IMR-90 (cell line): ENCODE measurements at regions of chr16 and their contacts with region 1.

Region 1: GRCh38 chr16:57325458-57325857 is 33.1 kb upstream of the CCL22 start:
- DNase-seq: peak; percentile 11
- ATAC-seq: peak; percentile 63
- H3K4me3 ChIP-seq: no peak overlapping the region
- H3K27ac ChIP-seq: no peak overlapping the region
- H3K4me1 ChIP-seq: no peaks in the 10 kb centered on the region
- H3K27me3 ChIP-seq: peaks cover 8% of the 10 kb centered on the region
- CTCF ChIP-seq: no peak
- POLR2A ChIP-seq: no peak
- RAD21 ChIP-seq: no peak

Region 2: DNA sequence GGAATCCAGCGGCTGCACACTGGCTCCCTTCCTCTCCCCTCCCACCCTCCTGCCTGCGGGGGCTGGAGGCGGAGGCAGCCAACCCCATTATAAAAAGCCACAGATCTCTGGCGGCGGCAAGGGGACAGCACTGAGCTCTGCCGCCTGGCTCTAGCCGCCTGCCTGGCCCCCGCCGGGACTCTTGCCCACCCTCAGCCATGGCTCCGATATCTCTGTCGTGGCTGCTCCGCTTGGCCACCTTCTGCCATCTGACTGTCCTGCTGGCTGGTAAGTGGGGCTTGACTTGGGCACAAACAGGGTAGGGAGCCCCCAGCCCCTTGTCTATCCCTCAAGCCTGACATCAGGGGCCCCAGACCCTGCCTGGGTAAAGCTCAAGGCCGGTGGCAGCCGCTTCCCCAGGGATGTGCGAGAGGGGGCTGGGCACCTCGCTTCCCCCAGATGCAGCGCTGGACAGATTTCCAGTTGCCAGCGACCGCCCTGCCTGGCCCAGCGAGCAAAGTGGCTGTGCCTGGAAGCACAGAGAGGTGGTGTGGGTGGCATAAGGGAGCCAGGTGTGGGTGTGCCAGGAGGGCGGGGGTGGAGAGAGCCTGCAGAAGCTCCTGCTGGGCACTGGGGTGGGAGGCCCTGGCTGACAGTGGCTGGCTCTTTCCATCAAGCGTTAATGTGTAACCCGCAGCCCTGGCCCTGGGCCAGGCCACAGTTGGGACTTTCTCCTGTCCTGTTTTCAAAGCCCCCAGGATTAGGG is 47.1 kb after region 1 on chr16 and contains the start of gene CX3CL1:
- CTCF ChIA-PET with region 1: no interaction called
- POLR2A ChIA-PET with region 1: no interaction called
- dilution Hi-C with region 1: no loop called
- in situ Hi-C with region 1: no loop called
- intact Hi-C with region 1: loop called (anchors 5 kb)
- DNase-seq: peak; percentile 39
- ATAC-seq: peak; percentile 89
- H3K4me3 ChIP-seq: no peak within 1 kb of the TSS
- H3K27ac ChIP-seq: no peak within 1 kb of the TSS
- H3K4me1 ChIP-seq: peaks cover 7% of the 10 kb centered on the region; the same call in 1 of the 2 replicates
- H3K27me3 ChIP-seq: peaks cover 46% of the 10 kb centered on the region
- CTCF ChIP-seq: no peak; the same call in 1 of the 2 replicates
- POLR2A ChIP-seq: no peak
- RAD21 ChIP-seq: no peak
- total RNA-seq, gene CX3CL1: under 0.01 and 0.18 TPM in 2 replicates

Region 3: DNA sequence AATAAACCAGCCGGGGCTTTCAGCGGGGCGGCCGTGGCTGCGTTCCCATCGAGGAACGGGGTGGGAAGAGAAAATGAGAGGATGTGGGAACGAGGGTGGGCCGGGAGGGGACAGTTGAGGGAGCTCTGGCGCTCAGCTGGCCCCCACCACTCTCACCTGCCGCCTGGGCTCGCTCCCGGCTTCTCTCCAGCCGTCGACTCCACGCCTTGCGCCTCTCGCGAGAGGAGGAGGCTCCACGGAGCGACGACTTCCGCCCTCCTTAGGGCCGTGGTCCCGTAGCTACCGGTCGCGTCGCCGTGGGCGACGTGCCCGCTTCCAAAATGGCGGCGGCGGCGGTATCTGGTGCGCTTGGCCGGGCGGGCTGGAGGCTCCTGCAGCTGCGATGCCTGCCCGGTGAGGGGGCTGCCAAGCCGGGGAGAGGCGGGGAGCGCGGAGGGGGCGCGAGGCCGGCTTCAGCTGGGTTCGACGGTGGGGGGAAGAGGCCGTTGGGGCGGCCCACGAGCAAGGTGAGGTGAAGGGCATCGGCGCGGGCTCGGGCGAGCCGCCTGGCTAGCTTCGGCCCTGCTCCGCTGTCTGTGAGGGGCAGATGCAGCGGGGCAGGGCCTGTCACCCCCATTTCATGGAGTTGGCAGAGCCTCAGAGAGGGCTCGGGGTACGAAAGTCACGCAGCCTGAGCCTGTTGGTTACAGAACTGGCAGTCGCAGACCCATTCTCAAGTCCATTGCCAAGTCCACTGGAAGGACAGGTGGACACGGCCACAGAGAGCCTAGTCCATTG is 121.9 kb after region 1 on chr16 and contains the starts of genes CIAPIN1 and COQ9:
- CTCF ChIA-PET with region 1: no interaction called
- POLR2A ChIA-PET with region 1: interaction called, 20 read pairs
- dilution Hi-C with region 1: no loop called
- in situ Hi-C with region 1: no loop called
- intact Hi-C with region 1: no loop called
- DNase-seq: peak; percentile 91
- ATAC-seq: peak; percentile 99
- H3K4me3 ChIP-seq: peak within 1 kb of the TSS; percentile 95
- H3K27ac ChIP-seq: peak within 1 kb of the TSS; percentile 71
- H3K4me1 ChIP-seq: peaks cover 3% of the 10 kb centered on the region
- H3K27me3 ChIP-seq: no peaks in the 10 kb centered on the region
- CTCF ChIP-seq: 0 out of 2 replicates have a peak, but pooled peaks have one; percentile 7
- POLR2A ChIP-seq: peak; percentile 72
- RAD21 ChIP-seq: no peak
- total RNA-seq, gene CIAPIN1: 42.2 and 47.7 TPM in 2 replicates
- total RNA-seq, gene COQ9: 50.0 and 57.9 TPM in 2 replicates